ENCODE measurements at regions of chr3 and their contacts with region 1.

Region 1: GRCh38 chr3:184362668-184363540 is 1.4 kb downstream of the POLR2H start:
- DNase-seq: peak; percentile 96
- H3K4me3 ChIP-seq: peak overlapping the region; percentile 82
- H3K27ac ChIP-seq: peak overlapping the region; percentile 98
- H3K27me3 ChIP-seq: no peaks in the 10 kb centered on the region
- CTCF ChIP-seq: peak; percentile 78

Region 2: GRCh38 chr3:184543843-184544512 is 181.1 kb after region 1 on chr3:
- in situ Hi-C with region 1: loop called (anchors 25 kb)
- DNase-seq: peak; percentile 83
- H3K4me3 ChIP-seq: no peak overlapping the region
- H3K27ac ChIP-seq: no peak overlapping the region
- H3K27me3 ChIP-seq: peaks cover 13% of the 10 kb centered on the region
- CTCF ChIP-seq: peak; percentile 89